MCF 10A (cell line): ENCODE measurements at regions of chr1 and their contacts with region 1.

Region 1: GRCh38 chr1:172002725-172003345 is 161.5 kb downstream of the DNM3 start:
- DNase-seq: peak; percentile 70
- H3K4me3 Mint-ChIP-seq: no peak overlapping the region
- H3K27ac Mint-ChIP-seq: no peak overlapping the region
- H3K4me1 Mint-ChIP-seq: peaks cover 18% of the 10 kb centered on the region
- H3K27me3 Mint-ChIP-seq: no peaks in the 10 kb centered on the region
- CTCF ChIP-seq: peak; percentile 95

Region 2: GRCh38 chr1:171990371-171990770 is 12.5 kb before region 1 on chr1:
- CTCF ChIA-PET with region 1: interaction called, 129 read pairs
- POLR2A ChIA-PET with region 1: interaction called, 3 read pairs
- intact Hi-C with region 1: no loop called
- DNase-seq: no peak
- H3K4me3 Mint-ChIP-seq: no peak overlapping the region
- H3K27ac Mint-ChIP-seq: no peak overlapping the region
- H3K4me1 Mint-ChIP-seq: no peaks in the 10 kb centered on the region
- H3K27me3 Mint-ChIP-seq: peaks cover 11% of the 10 kb centered on the region
- CTCF ChIP-seq: no peak

Region 3: DNA sequence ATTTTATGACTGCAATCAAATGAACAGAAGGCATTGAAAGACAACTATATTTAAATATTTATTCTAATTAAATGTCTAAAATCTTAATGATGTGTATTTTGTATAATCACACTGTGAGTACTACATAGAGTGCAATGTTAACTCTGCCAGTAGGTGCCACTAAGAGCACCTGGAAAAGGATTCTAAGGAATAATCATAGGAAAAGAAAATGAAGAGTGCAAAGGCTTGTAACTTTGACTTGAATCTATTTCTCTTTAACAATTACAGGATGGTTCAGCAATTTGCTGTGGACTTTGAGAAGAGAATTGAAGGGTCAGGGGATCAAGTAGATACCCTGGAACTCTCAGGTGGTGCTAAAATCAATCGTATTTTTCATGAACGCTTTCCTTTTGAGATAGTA is 38.9 kb after region 1 on chr1:
- CTCF ChIA-PET with region 1: interaction called, 34 read pairs
- POLR2A ChIA-PET with region 1: interaction called, 7 read pairs
- intact Hi-C with region 1: no loop called
- DNase-seq: peak; percentile 16
- H3K4me3 Mint-ChIP-seq: no peak overlapping the region
- H3K27ac Mint-ChIP-seq: no peak overlapping the region
- H3K4me1 Mint-ChIP-seq: peaks cover 21% of the 10 kb centered on the region
- H3K27me3 Mint-ChIP-seq: no peaks in the 10 kb centered on the region
- CTCF ChIP-seq: peak; percentile 19

Region 4: DNA sequence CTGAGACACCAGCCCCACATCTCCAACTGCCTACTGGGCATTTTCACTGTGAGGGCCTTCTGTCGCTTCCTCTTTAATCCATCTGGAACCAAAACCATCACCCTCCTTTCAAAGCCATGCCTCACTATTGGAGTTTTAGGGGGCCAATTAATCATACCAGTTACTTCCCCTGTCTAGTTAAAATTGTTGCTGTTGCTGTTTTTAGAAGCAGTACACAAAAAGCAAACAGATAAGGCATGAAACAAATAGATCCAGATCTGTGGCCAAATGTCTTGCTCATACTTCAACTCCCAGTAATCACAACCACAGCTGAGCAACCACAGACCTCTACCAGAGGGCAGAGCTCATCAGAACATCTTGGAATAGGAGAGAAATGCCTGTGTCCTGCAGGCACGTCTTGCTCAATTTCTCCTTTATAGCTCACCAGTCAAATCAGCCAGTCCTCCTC is 283.8 kb after region 1 on chr1:
- CTCF ChIA-PET with region 1: interaction called, 8 read pairs
- POLR2A ChIA-PET with region 1: no interaction called
- intact Hi-C with region 1: loop called (anchors 10 kb)
- DNase-seq: peak; percentile 94
- H3K4me3 Mint-ChIP-seq: no peak overlapping the region
- H3K27ac Mint-ChIP-seq: peak overlapping the region; percentile 61
- H3K4me1 Mint-ChIP-seq: peaks cover 26% of the 10 kb centered on the region
- H3K27me3 Mint-ChIP-seq: no peaks in the 10 kb centered on the region
- CTCF ChIP-seq: no peak

Region 5: DNA sequence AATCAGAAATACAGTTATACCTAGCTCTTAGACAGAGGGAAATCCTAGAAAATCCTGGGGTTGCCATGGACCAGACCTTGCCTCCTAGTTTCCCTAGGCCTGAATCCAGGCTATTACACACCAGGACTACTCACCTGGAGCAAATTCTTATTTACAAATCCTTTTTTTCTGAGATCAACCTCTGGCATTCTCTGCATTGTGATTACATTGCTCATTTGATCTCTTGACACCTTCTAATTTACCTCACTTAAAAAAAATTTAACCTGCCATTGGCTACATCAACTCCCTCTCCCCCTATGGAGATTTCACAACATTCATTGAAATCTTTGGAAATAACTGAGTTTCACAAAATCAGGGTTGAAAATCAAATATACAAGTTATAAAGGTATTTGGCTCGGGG is 414.7 kb after region 1 on chr1:
- CTCF ChIA-PET with region 1: interaction called, 10 read pairs
- POLR2A ChIA-PET with region 1: interaction called, 3 read pairs
- intact Hi-C with region 1: no loop called
- DNase-seq: peak; percentile 30
- H3K4me3 Mint-ChIP-seq: no peak overlapping the region
- H3K27ac Mint-ChIP-seq: no peak overlapping the region
- H3K4me1 Mint-ChIP-seq: peaks cover 7% of the 10 kb centered on the region
- H3K27me3 Mint-ChIP-seq: no peaks in the 10 kb centered on the region
- CTCF ChIP-seq: no peak

Region 6: DNA sequence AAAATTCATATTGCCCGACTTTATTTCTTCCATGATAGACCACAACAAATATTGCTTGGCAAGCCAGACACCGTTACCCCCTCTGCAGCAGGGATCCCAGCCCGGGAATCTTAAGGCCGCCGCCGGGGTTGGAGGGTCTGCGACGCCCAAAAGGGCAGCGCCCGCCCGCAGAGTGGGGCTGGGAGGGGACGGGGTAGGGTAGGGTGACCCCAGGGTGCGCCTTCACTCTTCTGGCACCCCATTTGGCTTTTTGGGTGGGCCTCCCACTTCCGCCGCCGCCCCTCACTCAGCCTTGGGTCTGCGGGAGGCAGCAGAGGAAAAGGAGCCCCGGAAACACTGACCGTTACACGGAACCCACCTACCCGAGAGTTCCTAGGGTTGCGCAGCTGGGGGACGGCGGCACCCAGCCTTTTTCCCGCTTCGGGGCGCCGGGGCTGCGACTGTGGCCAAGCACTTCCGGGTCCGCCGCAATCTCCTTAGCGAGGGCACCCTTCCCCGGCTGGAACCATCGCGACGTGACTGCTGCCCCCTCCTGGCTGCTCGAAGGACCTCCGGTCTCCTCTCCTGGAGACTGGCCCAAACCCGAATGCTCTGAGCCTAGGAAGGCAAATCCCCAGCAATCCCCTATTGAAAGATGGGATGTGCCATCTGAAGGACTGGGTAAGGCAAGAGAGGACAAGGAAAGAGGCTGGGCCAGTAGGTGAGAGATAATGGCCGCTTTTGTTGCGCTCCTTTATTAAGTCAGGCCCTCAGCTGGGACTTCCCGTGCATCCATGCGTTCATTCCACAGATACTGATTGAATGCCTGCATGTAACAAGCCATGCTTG is 441.0 kb after region 1 on chr1 and contains the start of gene PIGC:
- CTCF ChIA-PET with region 1: interaction called, 40 read pairs
- POLR2A ChIA-PET with region 1: no interaction called
- intact Hi-C with region 1: loop called (anchors 1 kb)
- DNase-seq: peak; percentile 93
- H3K4me3 Mint-ChIP-seq: peak within 1 kb of the TSS; percentile 85
- H3K27ac Mint-ChIP-seq: peak within 1 kb of the TSS; percentile 92
- H3K4me1 Mint-ChIP-seq: peaks cover 33% of the 10 kb centered on the region
- H3K27me3 Mint-ChIP-seq: no peaks in the 10 kb centered on the region
- CTCF ChIP-seq: peak; percentile 87
- total RNA-seq, gene PIGC: 20.2 and 23.1 TPM in 2 replicates